ENCODE measurements at regions of chr1 and their contacts with region 1.

Region 1: GRCh38 chr1:174836543-174836942 is 163.2 kb upstream of the CACYBP start:
- DNase-seq: no peak
- H3K4me3 Mint-ChIP-seq: no peak overlapping the region
- H3K27ac Mint-ChIP-seq: no peak overlapping the region
- H3K4me1 Mint-ChIP-seq: peaks cover 2% of the 10 kb centered on the region
- H3K27me3 Mint-ChIP-seq: no peaks in the 10 kb centered on the region

Region 2: GRCh38 chr1:174825127-174825526 is 11.4 kb before region 1 on chr1:
- CTCF ChIA-PET with region 1: interaction called, 5 read pairs
- intact Hi-C with region 1: loop called (anchors 1 kb)
- DNase-seq: no peak
- H3K4me3 Mint-ChIP-seq: no peak overlapping the region
- H3K27ac Mint-ChIP-seq: no peak overlapping the region
- H3K4me1 Mint-ChIP-seq: peaks cover 3% of the 10 kb centered on the region
- H3K27me3 Mint-ChIP-seq: no peaks in the 10 kb centered on the region